HepG2 (cell line): ENCODE measurements at regions of chr12 and their contacts with region 1.

Region 1: GRCh38 chr12:55829967-55830600 is 697 bp upstream of the DNAJC14 start:
- DNase-seq: no peak
- ATAC-seq: peak; percentile 63
- H3K4me3 ChIP-seq: peak overlapping the region; percentile 76 to 87 (median 79)
- H3K27ac ChIP-seq: peak overlapping the region; percentile 93
- H3K4me1 ChIP-seq: peaks cover 46% of the 10 kb centered on the region
- H3K27me3 ChIP-seq: no peaks in the 10 kb centered on the region; a peak in 1 of 5 replicates
- CTCF ChIP-seq: no peak
- EP300 ChIP-seq: no peak
- POLR2A ChIP-seq: peak; percentile 32 to 52; a peak in 2 of 4 replicates
- RAD21 ChIP-seq: no peak

Region 2: DNA sequence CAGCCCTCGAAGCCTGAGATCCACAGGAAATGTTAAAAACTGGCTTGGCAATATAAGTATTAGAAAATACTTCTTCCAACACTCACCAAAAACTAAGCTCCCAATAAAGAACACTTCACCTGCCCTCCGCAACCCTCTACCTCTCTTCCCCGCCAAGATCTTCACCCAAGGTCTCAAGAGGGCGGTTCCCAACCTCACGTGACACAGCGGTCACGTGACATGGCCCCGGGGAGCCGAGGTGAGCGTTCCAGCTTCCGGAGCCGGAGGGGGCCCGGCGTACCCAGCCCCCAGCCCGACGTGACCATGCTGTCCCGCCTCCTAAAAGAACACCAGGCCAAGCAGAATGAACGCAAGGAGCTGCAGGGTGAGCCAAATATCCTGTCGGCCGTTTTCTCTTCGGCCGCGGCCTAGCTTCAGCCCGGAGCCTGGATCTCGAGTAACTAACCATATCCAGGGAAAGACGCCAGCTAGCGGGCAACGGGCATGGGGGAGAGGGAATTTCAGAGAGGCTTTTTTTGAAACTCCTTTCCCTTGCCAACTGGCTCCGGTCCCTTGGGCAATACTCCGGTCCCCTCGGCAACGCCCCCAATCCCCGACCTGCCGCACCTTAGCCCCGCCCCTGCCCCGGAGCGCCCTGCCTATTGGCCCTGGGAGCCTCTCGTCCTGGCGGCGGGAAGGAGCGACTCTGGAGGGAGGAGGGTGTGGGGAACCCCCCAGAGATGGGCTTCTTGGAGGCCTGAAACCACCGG is 114.1 kb before region 1 on chr12 and contains the start of gene BLOC1S1:
- CTCF ChIA-PET with region 1: no interaction called
- POLR2A ChIA-PET with region 1: interaction called, 19 read pairs
- in situ Hi-C with region 1: no loop called
- intact Hi-C with region 1: no loop called
- DNase-seq: peak; percentile 86
- ATAC-seq: peak; percentile 82
- H3K4me3 ChIP-seq: peak within 1 kb of the TSS; percentile 77 to 96 (median 84)
- H3K27ac ChIP-seq: peak within 1 kb of the TSS; percentile 81
- H3K4me1 ChIP-seq: peaks cover 54% of the 10 kb centered on the region
- H3K27me3 ChIP-seq: peaks cover 0 to 11% of the 10 kb centered on the region in 2 experiments; a peak in 2 of 5 replicates
- CTCF ChIP-seq: no peak
- EP300 ChIP-seq: peak in 1 of 2 experiments; percentile 36; a peak in 1 of 4 replicates
- POLR2A ChIP-seq: peak; percentile 55 to 60
- RAD21 ChIP-seq: no peak
- total RNA-seq, gene BLOC1S1: 95.3 and 99.7 TPM in 2 replicates

Region 3: DNA sequence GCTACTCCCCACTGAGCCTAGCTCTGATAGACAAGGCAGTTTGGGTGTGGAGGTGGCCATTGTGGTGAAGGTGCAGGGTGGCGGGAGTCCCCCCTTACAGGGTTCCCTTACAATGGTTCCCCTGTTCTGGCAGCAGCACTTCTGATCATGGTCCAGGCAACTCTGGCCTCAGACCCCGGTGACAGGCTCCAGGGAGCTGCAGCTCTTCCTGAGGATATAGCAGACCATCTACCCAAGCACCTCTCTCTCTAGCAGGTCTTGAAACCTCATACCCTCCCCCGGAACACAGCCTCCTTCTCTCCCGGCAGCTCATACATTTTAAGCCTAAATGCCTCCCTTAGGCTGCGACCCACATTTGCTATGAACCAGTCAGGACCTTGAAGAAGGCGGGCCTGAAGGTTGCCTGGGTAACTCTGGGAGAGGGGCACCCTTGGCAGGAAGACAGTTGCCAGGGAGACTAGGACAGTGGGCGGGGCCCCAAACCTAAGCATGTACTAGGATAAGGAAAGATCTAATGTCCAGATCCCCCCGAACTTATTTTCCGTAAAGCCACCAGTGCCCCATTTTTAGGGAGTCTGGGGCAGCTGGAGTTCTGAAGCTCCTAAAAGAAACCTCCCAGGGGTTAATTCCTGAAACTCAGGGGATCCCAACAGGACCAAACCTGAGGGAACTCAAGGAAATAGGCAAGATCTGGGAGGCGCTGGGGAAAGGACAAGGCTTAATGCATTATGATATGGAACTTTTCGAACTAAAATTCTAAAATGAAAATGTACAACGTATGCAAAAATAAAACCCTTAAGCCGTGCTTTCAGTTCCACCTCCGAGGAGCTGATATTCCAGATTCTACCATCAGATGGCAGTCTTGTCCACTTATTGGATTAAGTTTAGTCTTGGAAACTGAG is 91.7 kb before region 1 on chr12:
- CTCF ChIA-PET with region 1: no interaction called
- POLR2A ChIA-PET with region 1: interaction called, 20 read pairs
- in situ Hi-C with region 1: no loop called
- intact Hi-C with region 1: no loop called
- DNase-seq: peak; percentile 72
- ATAC-seq: peak; percentile 57
- H3K4me3 ChIP-seq: peak overlapping the region; percentile 50 to 66 (median 63)
- H3K27ac ChIP-seq: peak overlapping the region; percentile 34
- H3K4me1 ChIP-seq: peaks cover 36% of the 10 kb centered on the region
- H3K27me3 ChIP-seq: peaks cover 0 to 6% of the 10 kb centered on the region in 2 experiments; a peak in 2 of 5 replicates
- CTCF ChIP-seq: peak; percentile 85
- EP300 ChIP-seq: peak in 1 of 2 experiments; percentile 88; a peak in 1 of 4 replicates
- POLR2A ChIP-seq: no peak
- RAD21 ChIP-seq: peak; percentile 71; the same call in 1 of the 2 replicates

Region 4: DNA sequence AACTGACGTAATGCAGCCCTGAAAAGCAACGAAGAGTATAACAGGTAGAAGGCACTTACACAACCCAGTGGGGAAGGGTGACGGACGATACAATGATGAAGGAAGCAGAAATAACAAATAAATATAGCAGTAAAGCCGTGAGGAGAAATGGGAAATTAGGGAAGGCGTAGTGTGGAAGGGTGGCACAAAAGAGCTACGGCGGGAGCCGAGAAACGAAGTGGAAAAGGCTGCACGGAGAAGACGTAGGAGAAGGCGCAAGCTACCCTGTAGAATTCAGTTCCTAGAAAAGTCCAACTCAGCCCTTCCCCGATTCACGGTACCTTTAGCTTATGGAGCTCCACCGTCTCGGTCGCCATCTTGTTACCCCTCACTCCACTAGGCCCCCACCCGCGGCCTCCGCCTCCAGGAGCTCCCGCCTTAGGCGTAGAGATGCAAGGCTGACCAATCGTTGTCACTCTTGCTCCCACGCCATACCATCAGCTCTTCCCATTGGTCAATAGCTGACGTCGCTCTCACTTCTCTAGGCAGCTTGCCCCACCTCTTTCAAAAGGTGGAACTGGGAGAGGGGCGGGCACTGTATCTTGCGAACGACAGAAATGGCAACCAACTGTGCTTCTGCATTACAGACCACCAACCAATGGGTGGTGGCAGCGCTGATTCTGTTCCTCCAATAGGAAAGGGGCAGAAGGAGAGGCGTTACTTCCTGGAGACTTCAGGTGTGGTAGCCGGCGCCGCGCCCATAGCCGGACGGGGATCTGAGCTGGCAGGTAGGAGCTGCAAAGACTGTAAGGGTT is 12.5 kb before region 1 on chr12 and contains the starts of genes ORMDL2 and SARNP:
- CTCF ChIA-PET with region 1: no interaction called
- POLR2A ChIA-PET with region 1: interaction called, 206 read pairs
- in situ Hi-C with region 1: no loop called
- intact Hi-C with region 1: no loop called
- DNase-seq: peak; percentile 100
- ATAC-seq: peak; percentile 97
- H3K4me3 ChIP-seq: peak within 1 kb of the TSS; percentile 81 to 93 (median 82)
- H3K27ac ChIP-seq: peak within 1 kb of the TSS; percentile 79
- H3K4me1 ChIP-seq: peaks cover 56% of the 10 kb centered on the region
- H3K27me3 ChIP-seq: no peaks in the 10 kb centered on the region; a peak in 1 of 5 replicates
- CTCF ChIP-seq: no peak
- EP300 ChIP-seq: 0 out of 4 replicates have a peak, but pooled peaks of 1 of the 2 experiments have one; percentile 6
- POLR2A ChIP-seq: peak; percentile 70 to 88
- RAD21 ChIP-seq: no peak
- total RNA-seq, gene ORMDL2: 14.8 and 28.6 TPM in 2 replicates
- total RNA-seq, gene SARNP: 95.4 and 137 TPM in 2 replicates

Region 5: GRCh38 chr12:55874443-55874842 is 44.4 kb after region 1 on chr12:
- CTCF ChIA-PET with region 1: no interaction called
- POLR2A ChIA-PET with region 1: no interaction called
- in situ Hi-C with region 1: no loop called
- intact Hi-C with region 1: no loop called
- DNase-seq: no peak
- ATAC-seq: no peak
- H3K4me3 ChIP-seq: no peak overlapping the region
- H3K27ac ChIP-seq: no peak overlapping the region
- H3K4me1 ChIP-seq: no peaks in the 10 kb centered on the region
- H3K27me3 ChIP-seq: no peaks in the 10 kb centered on the region
- CTCF ChIP-seq: no peak
- EP300 ChIP-seq: no peak
- POLR2A ChIP-seq: no peak
- RAD21 ChIP-seq: no peak

Region 6: GRCh38 chr12:55926738-55927587 is 96.9 kb after region 1 on chr12:
- CTCF ChIA-PET with region 1: no interaction called
- POLR2A ChIA-PET with region 1: interaction called, 108 read pairs
- in situ Hi-C with region 1: loop called (anchors 5 kb)
- intact Hi-C with region 1: loop called (anchors 1 kb)
- DNase-seq: peak; percentile 90
- ATAC-seq: peak; percentile 73
- H3K4me3 ChIP-seq: peak overlapping the region; percentile 72 to 90 (median 89)
- H3K27ac ChIP-seq: peak overlapping the region; percentile 96
- H3K4me1 ChIP-seq: peaks cover 58% of the 10 kb centered on the region
- H3K27me3 ChIP-seq: no peaks in the 10 kb centered on the region; a peak in 1 of 5 replicates
- CTCF ChIP-seq: peak; percentile 79
- EP300 ChIP-seq: no peak
- POLR2A ChIP-seq: peak; percentile 56 to 62
- RAD21 ChIP-seq: no peak

Region 7: DNA sequence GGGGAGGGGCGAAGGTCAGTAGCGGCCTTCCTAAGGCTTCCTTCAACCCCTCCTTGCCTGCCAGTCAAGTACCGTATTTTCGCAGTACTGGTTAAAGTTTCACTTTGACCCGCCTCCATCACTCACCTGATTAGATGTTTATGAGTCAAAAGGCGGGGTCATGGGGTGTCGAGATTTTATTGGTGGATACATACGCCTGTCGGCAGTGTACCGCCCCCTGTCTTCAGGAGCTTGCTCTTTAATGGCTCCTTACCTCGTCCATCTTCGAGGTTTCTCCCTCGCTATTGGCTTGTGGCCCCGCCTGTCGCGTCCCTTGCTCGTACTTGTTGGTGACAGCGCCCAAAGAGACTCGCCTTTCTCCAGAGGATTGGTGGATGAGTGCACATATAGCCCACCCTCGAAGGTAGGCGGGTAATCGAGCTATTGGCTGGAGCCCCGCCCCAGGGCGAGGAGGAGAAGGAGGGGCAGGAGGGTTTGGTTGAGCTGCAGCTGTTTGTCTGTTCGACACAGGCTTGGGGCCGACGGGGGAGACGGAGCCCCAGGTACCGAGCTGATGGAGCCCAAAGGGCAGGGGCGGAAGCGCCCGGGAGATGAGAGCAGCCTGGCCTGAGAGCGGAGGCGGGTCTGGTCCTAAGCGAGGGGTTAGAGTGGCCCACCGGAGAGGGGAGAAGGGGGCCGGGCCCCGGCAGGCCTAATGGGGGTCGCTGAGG is 143.7 kb after region 1 on chr12 and contains the start of gene RAB5B:
- CTCF ChIA-PET with region 1: no interaction called
- POLR2A ChIA-PET with region 1: interaction called, 26 read pairs
- in situ Hi-C with region 1: no loop called
- intact Hi-C with region 1: no loop called
- DNase-seq: peak; percentile 100
- ATAC-seq: peak; percentile 95
- H3K4me3 ChIP-seq: peak within 1 kb of the TSS; percentile 90 to 99 (median 96)
- H3K27ac ChIP-seq: peak within 1 kb of the TSS; percentile 82
- H3K4me1 ChIP-seq: peaks cover 44% of the 10 kb centered on the region
- H3K27me3 ChIP-seq: no peaks in the 10 kb centered on the region
- CTCF ChIP-seq: 0 out of 2 replicates have a peak, but pooled peaks have one; percentile 10
- EP300 ChIP-seq: no peak
- POLR2A ChIP-seq: peak; percentile 93
- RAD21 ChIP-seq: peak; percentile 42; the same call in 1 of the 2 replicates
- total RNA-seq, gene RAB5B: 26.0 and 33.1 TPM in 2 replicates

Region 8: DNA sequence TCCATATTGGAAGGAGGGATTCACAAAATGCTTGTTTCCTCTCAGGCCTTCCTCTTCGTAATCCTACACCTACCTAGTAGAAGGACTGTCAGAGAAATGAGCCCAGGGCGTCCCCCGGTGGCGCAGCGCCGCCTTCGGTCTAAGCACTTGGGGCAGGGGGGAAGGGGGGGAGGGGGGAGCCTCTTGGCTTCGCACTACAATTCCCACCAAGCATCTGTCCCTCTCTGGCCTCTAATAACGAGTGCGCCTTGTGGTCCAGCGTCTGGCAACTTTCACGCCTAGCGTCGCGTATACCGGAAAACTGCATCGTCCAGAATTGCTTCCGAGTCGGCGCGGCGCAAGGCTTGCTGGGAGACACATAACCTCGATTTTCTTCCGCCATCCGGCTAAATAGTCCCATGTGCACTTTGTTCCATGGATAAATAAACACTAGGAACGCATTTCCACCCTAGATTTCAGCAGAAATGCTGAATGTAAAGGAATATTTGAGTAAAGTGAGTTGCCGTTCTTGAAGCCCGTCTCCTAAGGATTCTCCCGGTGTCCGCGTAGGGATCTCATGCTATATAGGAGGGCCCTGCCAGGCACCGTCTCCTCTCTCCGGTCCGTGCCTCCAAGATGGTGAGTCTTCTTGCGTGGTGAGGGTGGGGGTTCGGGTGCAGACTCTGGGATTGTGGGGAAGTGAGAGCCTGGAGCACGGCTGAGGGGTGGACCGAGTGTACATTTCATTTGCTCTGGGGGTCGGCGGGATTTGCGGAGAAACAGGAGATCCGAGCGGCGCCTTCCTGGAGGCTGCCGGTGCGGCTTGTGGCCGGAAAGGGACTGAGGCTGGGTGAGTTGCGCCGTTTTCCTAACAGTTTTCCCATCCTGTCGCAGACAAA is 211.7 kb after region 1 on chr12 and contains the start of gene RPS26:
- CTCF ChIA-PET with region 1: no interaction called
- POLR2A ChIA-PET with region 1: interaction called, 4 read pairs
- in situ Hi-C with region 1: no loop called
- intact Hi-C with region 1: loop called (anchors 1 kb)
- DNase-seq: peak; percentile 99
- ATAC-seq: peak; percentile 95
- H3K4me3 ChIP-seq: peak within 1 kb of the TSS; percentile 84 to 94 (median 87)
- H3K27ac ChIP-seq: peak within 1 kb of the TSS; percentile 98
- H3K4me1 ChIP-seq: peaks cover 45% of the 10 kb centered on the region
- H3K27me3 ChIP-seq: no peaks in the 10 kb centered on the region
- CTCF ChIP-seq: peak; percentile 79
- EP300 ChIP-seq: 0 out of 4 replicates have a peak, but pooled peaks of 1 of the 2 experiments have one; percentile 10
- POLR2A ChIP-seq: peak; percentile 98 to 99
- RAD21 ChIP-seq: 0 out of 2 replicates have a peak, but pooled peaks have one; percentile 10
- total RNA-seq, gene RPS26: 421 and 486 TPM in 2 replicates